ENCODE measurements at regions of chr22 and their contacts with region 1.

Region 1: GRCh38 chr22:20020533-20021195 is at the start of gene TANGO2:
- DNase-seq: peak; percentile 100
- ATAC-seq: peak; percentile 87
- H3K4me3 ChIP-seq: peak within 1 kb of the TSS; percentile 70
- H3K27ac ChIP-seq: peak within 1 kb of the TSS; percentile 85
- H3K4me1 ChIP-seq: peaks cover 51 to 78% of the 10 kb centered on the region in 2 experiments
- H3K27me3 ChIP-seq: peaks cover 0 to 8% of the 10 kb centered on the region in 2 experiments; a peak in 2 of 5 replicates
- CTCF ChIP-seq: peak in 2 of 3 experiments; percentile 24 to 26; a peak in 3 of 6 replicates
- EP300 ChIP-seq: no peak; the same call in 1 of the 2 replicates
- POLR2A ChIP-seq: no peak
- RAD21 ChIP-seq: 0 out of 4 replicates have a peak, but pooled peaks of 1 of the 2 experiments have one; percentile 21
- polyA plus RNA-seq, gene TANGO2: 15.5 to 17.5 TPM

Region 2: GRCh38 chr22:19419464-19420178 is 601.0 kb before region 1 on chr22:
- CTCF ChIA-PET with region 1: no interaction called
- POLR2A ChIA-PET with region 1: no interaction called
- in situ Hi-C with region 1: no loop called
- intact Hi-C with region 1: loop called (anchors 10 kb)
- DNase-seq: peak; percentile 87 to 96 (median 90)
- ATAC-seq: peak; percentile 68
- H3K4me3 ChIP-seq: no peak overlapping the region
- H3K27ac ChIP-seq: peak overlapping the region; percentile 64
- H3K4me1 ChIP-seq: peaks cover 44 to 50% of the 10 kb centered on the region in 2 experiments
- H3K27me3 ChIP-seq: no peaks in the 10 kb centered on the region
- CTCF ChIP-seq: peak in 1 of 3 experiments; percentile 19; a peak in 2 of 6 replicates
- EP300 ChIP-seq: peak; percentile 98
- POLR2A ChIP-seq: no peak
- RAD21 ChIP-seq: no peak

Region 3: GRCh38 chr22:19998232-19998951 is 22.3 kb before region 1 on chr22:
- CTCF ChIA-PET with region 1: interaction called, 3 read pairs
- POLR2A ChIA-PET with region 1: interaction called, 24 read pairs
- in situ Hi-C with region 1: no loop called
- intact Hi-C with region 1: loop called (anchors 2 kb)
- DNase-seq: no peak
- ATAC-seq: no peak
- H3K4me3 ChIP-seq: no peak overlapping the region
- H3K27ac ChIP-seq: no peak overlapping the region
- H3K4me1 ChIP-seq: peaks cover 16 to 53% of the 10 kb centered on the region in 2 experiments; a peak in 4 of 5 replicates
- H3K27me3 ChIP-seq: no peaks in the 10 kb centered on the region
- CTCF ChIP-seq: no peak
- EP300 ChIP-seq: no peak
- POLR2A ChIP-seq: no peak
- RAD21 ChIP-seq: no peak

Region 4: GRCh38 chr22:20061481-20061861 is 40.8 kb after region 1 on chr22:
- CTCF ChIA-PET with region 1: no interaction called
- POLR2A ChIA-PET with region 1: interaction called, 19 read pairs
- in situ Hi-C with region 1: no loop called
- intact Hi-C with region 1: loop called (anchors 2 kb)
- DNase-seq: no peak
- ATAC-seq: no peak
- H3K4me3 ChIP-seq: no peak overlapping the region
- H3K27ac ChIP-seq: no peak overlapping the region
- H3K4me1 ChIP-seq: peaks cover 28 to 85% of the 10 kb centered on the region in 2 experiments
- H3K27me3 ChIP-seq: no peaks in the 10 kb centered on the region
- CTCF ChIP-seq: no peak
- EP300 ChIP-seq: no peak
- POLR2A ChIP-seq: no peak
- RAD21 ChIP-seq: no peak

Region 5: DNA sequence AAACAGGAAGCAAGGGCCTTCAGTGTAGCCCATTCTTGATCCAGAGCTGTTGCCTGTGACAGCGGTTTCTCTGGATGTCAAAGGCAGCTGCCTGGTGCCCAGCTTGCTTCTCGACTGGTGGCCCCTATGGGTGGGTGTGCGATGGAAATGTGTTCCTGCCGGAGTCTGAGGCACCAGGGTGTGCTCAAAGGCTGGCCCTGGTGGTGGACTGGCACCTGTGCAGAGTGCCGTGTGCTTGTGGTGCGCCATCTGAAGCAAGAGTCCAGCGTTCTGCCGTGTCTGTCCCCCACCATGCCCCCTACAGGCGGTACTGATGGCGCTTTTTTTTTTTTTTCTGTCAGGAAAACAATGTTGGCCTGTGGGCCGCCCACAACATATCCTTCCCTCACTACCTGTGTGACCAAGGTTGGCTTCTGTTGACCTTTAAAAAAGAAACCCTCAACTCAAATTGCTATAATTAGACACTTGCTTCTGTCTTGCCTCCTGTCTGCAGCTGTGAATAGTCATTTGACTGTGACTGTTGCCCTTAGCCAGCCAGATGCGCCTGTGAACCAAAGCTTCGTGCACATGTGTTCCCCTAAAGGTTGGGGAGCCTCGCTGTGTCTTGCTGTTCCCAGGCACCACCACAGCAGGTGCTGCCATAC is 90.5 kb after region 1 on chr22:
- CTCF ChIA-PET with region 1: no interaction called
- POLR2A ChIA-PET with region 1: interaction called, 14 read pairs
- in situ Hi-C with region 1: no loop called
- intact Hi-C with region 1: no loop called
- DNase-seq: peak; percentile 82 to 89 (median 86)
- ATAC-seq: peak; percentile 70
- H3K4me3 ChIP-seq: no peak overlapping the region
- H3K27ac ChIP-seq: peak overlapping the region; percentile 18; the same call in 1 of the 3 replicates
- H3K4me1 ChIP-seq: peaks cover 9 to 81% of the 10 kb centered on the region in 2 experiments; a peak in 4 of 5 replicates
- H3K27me3 ChIP-seq: no peaks in the 10 kb centered on the region
- CTCF ChIP-seq: peak; percentile 93 to 99 (median 94)
- EP300 ChIP-seq: no peak
- POLR2A ChIP-seq: peak; percentile 87
- RAD21 ChIP-seq: peak in 1 of 2 experiments; percentile 31; a peak in 1 of 4 replicates

Region 6: DNA sequence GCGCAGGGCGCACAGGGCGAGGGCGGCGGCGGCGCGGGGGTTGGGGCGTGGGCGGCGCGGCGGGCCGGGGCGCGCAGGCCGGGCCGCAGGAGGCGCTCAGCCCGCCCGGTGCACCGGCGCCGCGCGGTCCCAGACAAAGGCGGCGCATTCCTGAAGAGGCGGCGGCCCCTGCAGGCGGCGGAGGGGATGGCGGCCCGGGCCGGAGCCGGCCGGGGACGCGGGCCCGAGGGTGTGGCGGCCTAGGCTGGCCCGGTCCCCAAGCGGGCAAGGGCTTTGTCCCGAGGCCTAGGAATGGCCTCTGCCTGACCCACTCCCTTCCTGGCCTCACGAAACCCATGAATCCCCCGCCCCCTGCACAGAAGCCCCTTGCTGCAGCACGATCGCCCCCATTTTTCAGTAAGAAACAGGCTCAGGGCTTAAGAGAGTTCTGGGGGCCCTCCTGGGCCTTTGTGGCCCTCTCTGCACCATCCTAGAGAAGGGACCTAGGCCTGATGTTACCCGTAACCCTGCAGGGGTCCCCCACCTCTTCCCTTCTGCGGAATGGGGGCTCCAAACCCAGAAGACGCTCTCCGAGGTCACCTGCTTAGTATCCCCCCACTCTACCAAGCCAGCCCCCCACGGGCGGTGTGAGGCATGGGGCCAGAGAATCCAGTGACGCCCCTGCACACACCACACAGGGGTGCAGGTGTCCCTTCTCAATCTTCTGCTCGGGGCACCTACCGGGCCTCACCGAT is 247.8 kb after region 1 on chr22 and contains the start of gene RTN4R:
- CTCF ChIA-PET with region 1: no interaction called
- POLR2A ChIA-PET with region 1: no interaction called
- in situ Hi-C with region 1: no loop called
- intact Hi-C with region 1: no loop called
- DNase-seq: peak; percentile 93 to 99 (median 96)
- ATAC-seq: peak; percentile 90
- H3K4me3 ChIP-seq: peak within 1 kb of the TSS; percentile 48
- H3K27ac ChIP-seq: no peak within 1 kb of the TSS
- H3K4me1 ChIP-seq: peaks cover 4 to 69% of the 10 kb centered on the region in 2 experiments; a peak in 4 of 5 replicates
- H3K27me3 ChIP-seq: peaks cover 19 to 69% of the 10 kb centered on the region in 2 experiments; a peak in 4 of 5 replicates
- CTCF ChIP-seq: peak; percentile 87 to 99 (median 98)
- EP300 ChIP-seq: peak; percentile 52
- POLR2A ChIP-seq: no peak
- RAD21 ChIP-seq: peak; percentile 98 to 99
- polyA plus RNA-seq, gene RTN4R: 0.04 TPM in 1 of 2 experiments, not detected in the other